Activated CD4-positive, alpha-beta T cell treated with anti-CD3 and anti-CD28 coated beads for 36 hours (primary cell): ENCODE measurements at regions of chr7 and their contacts with region 1.

Region 1: GRCh38 chr7:28596245-28596935 is 184.1 kb downstream of the CREB5 start:
- DNase-seq: no peak
- ATAC-seq: no peak
- H3K4me3 Mint-ChIP-seq: no peak overlapping the region
- H3K27ac Mint-ChIP-seq: no peak overlapping the region
- H3K4me1 Mint-ChIP-seq: no peaks in the 10 kb centered on the region
- H3K27me3 Mint-ChIP-seq: peaks cover 4% of the 10 kb centered on the region

Region 2: GRCh38 chr7:28654110-28654509 is 57.7 kb after region 1 on chr7:
- CTCF ChIA-PET with region 1: no interaction called
- POLR2A ChIA-PET with region 1: no interaction called
- intact Hi-C with region 1: loop called in 1 of 2 experiments (anchors 10 kb)
- DNase-seq: no peak
- ATAC-seq: no peak
- H3K4me3 Mint-ChIP-seq: no peak overlapping the region
- H3K27ac Mint-ChIP-seq: no peak overlapping the region
- H3K4me1 Mint-ChIP-seq: no peaks in the 10 kb centered on the region
- H3K27me3 Mint-ChIP-seq: no peaks in the 10 kb centered on the region